Lower leg skin (tissue), 4 donors: ENCODE measurements at regions of chrX and their contacts with region 1.

Region 1: DNA sequence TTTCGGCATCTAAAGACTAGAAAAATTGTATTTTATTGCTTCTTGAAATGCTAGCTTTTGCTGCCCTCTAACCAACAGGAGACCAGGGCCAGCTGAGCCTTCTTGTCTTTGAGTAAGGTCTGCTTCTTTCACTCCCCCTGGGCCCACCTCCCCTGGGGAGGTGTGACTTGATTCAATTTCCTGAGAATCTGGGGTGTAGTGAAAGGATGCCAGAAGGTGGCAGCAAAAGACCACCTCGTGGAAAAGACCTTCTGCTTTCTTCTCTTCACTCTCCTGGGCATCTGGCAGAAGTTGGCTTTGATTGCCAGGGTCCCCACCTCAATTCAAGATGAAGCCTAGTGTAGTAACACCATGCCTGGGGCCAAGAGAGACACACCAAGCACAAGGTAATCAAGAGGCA is 96.5 kb upstream of the MAOA start:
- DNase-seq: peak in 1 of 2 donors; percentile 21
- H3K4me3 ChIP-seq: no peak overlapping the region
- CTCF ChIP-seq: no peak
- POLR2A ChIP-seq: no peak

Region 2: GRCh38 chrX:43590150-43590549 is 30.5 kb after region 1 on chrX:
- intact Hi-C with region 1: no loop called
- DNase-seq: no peak
- H3K4me3 ChIP-seq: no peak overlapping the region
- CTCF ChIP-seq: no peak
- POLR2A ChIP-seq: no peak

Region 3: GRCh38 chrX:43633777-43634176 is 74.1 kb after region 1 on chrX:
- intact Hi-C with region 1: no loop called
- DNase-seq: no peak
- H3K4me3 ChIP-seq: no peak overlapping the region
- CTCF ChIP-seq: no peak
- POLR2A ChIP-seq: no peak

Region 4: DNA sequence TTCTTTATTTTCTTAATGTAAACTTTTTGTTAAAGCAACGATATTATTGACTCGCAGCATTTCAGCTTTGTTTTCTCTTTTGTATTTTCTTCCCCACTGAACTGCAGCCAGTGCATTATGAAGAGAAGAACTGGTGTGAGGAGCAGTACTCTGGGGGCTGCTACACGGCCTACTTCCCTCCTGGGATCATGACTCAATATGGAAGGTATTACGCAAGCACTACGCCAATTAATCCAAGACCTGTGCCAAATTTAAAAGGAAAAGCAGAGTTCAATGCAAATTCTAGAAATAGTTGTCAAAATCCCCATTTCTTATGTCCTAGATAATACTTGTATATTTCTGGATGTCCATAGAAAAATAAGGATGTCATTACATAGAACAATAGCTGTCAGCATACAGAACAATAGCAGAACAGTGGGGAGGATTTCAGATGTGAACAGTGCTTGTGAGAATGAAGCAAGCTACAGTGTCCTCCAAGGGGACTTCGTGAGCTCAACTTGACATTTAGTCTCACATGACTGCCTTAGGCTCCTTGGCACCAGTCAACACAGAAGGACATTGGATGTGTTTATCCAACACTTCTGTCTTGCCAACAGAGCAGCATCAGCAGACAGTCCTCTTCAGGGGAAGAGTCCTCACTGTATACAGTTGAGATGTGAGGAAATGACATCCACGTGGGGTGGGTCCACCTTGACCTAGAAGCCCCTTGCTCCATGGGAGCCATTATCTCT is 182.4 kb after region 1 on chrX:
- intact Hi-C with region 1: loop called (anchors 10 kb)
- DNase-seq: peak; percentile 33 to 75
- H3K4me3 ChIP-seq: no peak overlapping the region
- CTCF ChIP-seq: no peak
- POLR2A ChIP-seq: no peak